ENCODE measurements at regions of chr12 and their contacts with region 1.

Region 1: GRCh38 chr12:96061864-96062453 is 26.6 kb upstream of the LTA4H start:
- DNase-seq: peak; percentile 82
- H3K4me3 ChIP-seq: no peak overlapping the region
- H3K27ac ChIP-seq: no peak overlapping the region
- H3K4me1 ChIP-seq: no peaks in the 10 kb centered on the region
- H3K27me3 ChIP-seq: no peaks in the 10 kb centered on the region
- CTCF ChIP-seq: peak; percentile 79

Region 2: GRCh38 chr12:96132819-96133218 is 70.9 kb after region 1 on chr12:
- intact Hi-C with region 1: loop called (anchors 5 kb)
- DNase-seq: no peak
- H3K4me3 ChIP-seq: no peak overlapping the region
- H3K27ac ChIP-seq: no peak overlapping the region
- H3K4me1 ChIP-seq: no peaks in the 10 kb centered on the region
- H3K27me3 ChIP-seq: no peaks in the 10 kb centered on the region
- CTCF ChIP-seq: no peak

Region 3: DNA sequence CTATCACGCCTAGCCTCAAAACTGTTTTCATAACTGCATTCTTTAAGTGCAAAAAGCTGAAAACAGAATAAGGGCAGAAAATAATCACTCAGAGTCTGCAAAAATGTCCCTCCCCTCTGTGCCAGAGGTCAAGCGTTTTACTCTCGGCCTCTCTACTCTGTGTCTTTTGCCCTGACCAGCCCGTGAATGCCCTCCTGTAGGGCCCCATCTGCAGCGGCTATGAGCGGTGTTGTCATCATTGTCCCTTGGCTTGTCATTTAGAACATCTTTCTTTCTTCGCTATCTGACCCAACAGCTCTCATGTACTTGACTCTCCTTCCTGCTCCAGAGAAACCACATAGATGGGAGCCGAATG is 153.9 kb after region 1 on chr12:
- intact Hi-C with region 1: loop called (anchors 2 kb)
- DNase-seq: no peak
- H3K4me3 ChIP-seq: no peak overlapping the region
- H3K27ac ChIP-seq: no peak overlapping the region
- H3K4me1 ChIP-seq: no peaks in the 10 kb centered on the region
- H3K27me3 ChIP-seq: no peaks in the 10 kb centered on the region
- CTCF ChIP-seq: no peak

Region 4: DNA sequence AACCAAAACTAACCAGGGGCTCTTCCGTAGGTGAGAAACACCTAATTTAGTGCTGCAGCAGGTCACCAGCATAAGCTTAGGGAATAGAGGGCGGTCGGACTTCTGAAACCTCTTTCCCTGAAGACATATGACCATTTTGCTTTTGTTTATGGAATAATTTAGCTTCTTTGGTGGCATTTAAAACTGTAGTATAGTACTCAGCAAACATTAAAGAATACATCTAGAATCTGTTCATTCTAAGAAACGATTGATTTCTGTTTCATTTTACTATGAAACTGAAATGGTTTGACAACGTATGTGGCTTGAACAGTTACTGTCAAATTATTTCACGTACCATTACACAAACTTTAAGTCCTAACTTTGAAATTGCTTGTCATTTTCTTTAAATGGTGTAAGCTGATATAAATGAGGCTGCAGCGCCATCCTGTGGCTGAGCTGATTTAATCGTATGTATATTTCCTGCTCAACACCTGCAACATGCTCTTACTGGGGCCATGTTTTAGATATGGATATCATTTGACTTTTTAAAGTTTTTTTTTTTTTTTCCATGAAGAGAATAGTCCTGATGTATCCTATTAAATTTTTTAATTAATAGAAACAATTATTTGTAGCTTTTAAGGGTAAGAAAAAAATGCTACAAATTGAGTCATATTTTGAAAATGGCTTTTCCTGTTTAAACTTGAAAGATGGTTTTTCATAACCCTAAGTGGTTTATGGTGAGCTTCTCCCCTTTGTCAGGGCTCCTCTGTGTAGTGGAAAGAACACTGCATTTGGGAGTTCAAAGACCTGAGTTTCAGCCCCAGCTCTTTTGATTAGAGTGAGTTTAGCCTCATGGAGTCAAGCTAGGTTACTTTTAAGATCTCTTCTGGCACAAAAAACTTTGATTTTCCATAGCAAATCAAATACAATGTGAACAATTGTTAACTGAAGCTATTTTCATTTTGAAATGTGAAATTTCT is 454.8 kb after region 1 on chr12:
- intact Hi-C with region 1: loop called (anchors 5 kb)
- DNase-seq: peak; percentile 72
- H3K4me3 ChIP-seq: no peak overlapping the region
- H3K27ac ChIP-seq: no peak overlapping the region
- H3K4me1 ChIP-seq: no peaks in the 10 kb centered on the region
- H3K27me3 ChIP-seq: no peaks in the 10 kb centered on the region
- CTCF ChIP-seq: peak; percentile 62